Activated CD4-positive, alpha-beta memory T cell treated with anti-CD3 and anti-CD28 coated beads for 36 hours (primary cell): ENCODE measurements at regions of chr3 and their contacts with region 1.

Region 1: GRCh38 chr3:42247576-42248027 is 18.4 kb downstream of the CCK start:
- DNase-seq: peak; percentile 73
- H3K4me3 Mint-ChIP-seq: no peak overlapping the region
- H3K27ac Mint-ChIP-seq: no peak overlapping the region
- H3K4me1 Mint-ChIP-seq: peaks cover 7% of the 10 kb centered on the region
- H3K27me3 Mint-ChIP-seq: peaks cover 9% of the 10 kb centered on the region

Region 2: DNA sequence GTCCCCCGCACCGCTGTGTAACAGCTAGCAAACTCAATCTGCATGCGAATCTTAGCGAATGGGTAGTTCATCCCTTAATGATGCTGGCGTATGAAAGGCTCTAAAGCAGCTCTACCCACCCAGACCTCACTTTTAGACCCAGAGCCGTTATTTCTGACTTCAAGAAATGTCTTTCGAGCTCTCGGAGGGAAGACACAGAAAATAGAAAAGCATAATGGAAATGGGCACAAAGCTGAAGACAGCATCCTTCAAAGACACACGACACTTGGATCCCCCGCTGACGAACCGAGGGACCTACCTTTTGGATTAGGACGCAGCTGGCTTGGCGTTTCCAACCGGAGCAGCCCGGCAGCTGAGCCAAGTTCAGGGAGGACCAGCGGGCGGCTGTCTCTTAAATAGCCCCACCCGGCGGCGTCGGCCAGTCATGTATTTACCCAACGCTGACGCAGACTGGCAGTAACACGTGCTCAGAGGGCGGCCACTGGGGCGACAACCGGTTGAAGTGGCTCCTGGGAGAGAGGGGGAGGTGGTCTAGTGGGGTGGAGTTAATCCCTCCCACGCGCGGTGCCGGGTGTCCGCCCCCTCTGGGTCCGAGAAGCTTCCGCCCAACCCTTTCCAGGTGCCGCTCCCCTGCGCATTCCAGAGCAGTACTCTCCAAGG is 16.9 kb after region 1 on chr3:
- CTCF ChIA-PET with region 1: interaction called, 12 read pairs
- POLR2A ChIA-PET with region 1: no interaction called
- intact Hi-C with region 1: no loop called
- DNase-seq: peak; percentile 38
- H3K4me3 Mint-ChIP-seq: no peak overlapping the region
- H3K27ac Mint-ChIP-seq: no peak overlapping the region
- H3K4me1 Mint-ChIP-seq: peaks cover 10% of the 10 kb centered on the region
- H3K27me3 Mint-ChIP-seq: peaks cover 62% of the 10 kb centered on the region

Region 3: GRCh38 chr3:42804106-42804830 is 556.7 kb after region 1 on chr3 and contains the start of gene HIGD1A:
- CTCF ChIA-PET with region 1: no interaction called
- POLR2A ChIA-PET with region 1: no interaction called
- intact Hi-C with region 1: no loop called
- DNase-seq: peak; percentile 96
- H3K4me3 Mint-ChIP-seq: peak within 1 kb of the TSS; percentile 95
- H3K27ac Mint-ChIP-seq: peak within 1 kb of the TSS; percentile 86
- H3K4me1 Mint-ChIP-seq: peaks cover 32% of the 10 kb centered on the region
- H3K27me3 Mint-ChIP-seq: peaks cover 7% of the 10 kb centered on the region
- total RNA-seq, gene HIGD1A: 63.7 to 68.4 TPM